GM10248 (cell line): ENCODE measurements at regions of chr16 and their contacts with region 1.

Region 1: GRCh38 chr16:24010440-24011089 is 174.8 kb downstream of the PRKCB start:
- DNase-seq: peak; percentile 66
- CTCF ChIP-seq: peak; percentile 89

Region 2: GRCh38 chr16:23803591-23804123 is 206.9 kb before region 1 on chr16:
- CTCF ChIA-PET with region 1: interaction called, 101 read pairs
- POLR2A ChIA-PET with region 1: no interaction called
- DNase-seq: peak; percentile 82
- CTCF ChIP-seq: peak; percentile 85

Region 3: DNA sequence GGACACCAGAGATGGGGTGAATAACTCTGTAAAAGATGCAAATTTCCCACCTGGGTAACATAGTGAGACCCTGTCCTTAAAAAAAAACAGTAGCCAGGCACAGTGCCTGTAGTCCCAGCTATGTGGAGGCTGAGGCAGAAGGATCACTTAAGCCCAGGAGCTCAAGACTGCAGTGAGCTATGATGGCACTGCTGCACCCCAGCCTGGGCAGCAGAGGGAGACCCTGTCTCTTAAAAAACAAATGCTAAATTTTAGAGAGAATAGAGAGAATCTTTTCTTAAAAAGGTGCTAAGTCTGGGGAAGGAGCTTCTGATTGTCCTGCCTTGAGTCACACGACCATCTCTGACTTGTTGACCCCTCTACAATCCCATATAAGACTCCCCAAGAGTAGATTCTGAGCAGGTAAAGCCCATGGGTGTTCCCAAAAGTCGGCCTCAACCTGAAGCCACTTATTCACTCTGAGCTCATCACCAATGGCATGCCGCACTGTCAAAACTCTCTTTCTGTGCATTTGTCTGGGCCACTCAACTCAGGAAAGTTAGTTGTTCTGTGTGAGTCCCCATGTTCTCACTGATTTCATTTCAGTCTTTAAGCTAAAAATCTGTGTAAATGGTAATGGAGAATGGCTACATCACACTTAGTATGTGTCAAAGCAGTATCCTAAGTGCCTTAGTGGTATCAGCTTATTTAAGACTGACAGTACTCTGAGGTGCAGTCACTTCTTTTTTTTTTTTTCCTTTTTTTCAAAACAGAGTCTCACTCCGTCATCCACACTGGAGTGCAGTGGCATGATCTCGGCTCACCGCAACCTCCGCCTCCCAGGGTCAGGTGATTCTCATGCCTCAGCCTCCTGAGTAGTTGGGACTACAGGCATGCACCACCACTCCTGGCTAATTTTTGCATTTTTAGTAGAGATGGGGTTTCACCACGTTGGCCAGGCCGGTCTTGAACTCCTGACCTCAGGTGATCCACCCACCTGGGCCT is 133.2 kb before region 1 on chr16:
- CTCF ChIA-PET with region 1: interaction called, 46 read pairs
- POLR2A ChIA-PET with region 1: no interaction called
- DNase-seq: peak; percentile 17
- CTCF ChIP-seq: peak; percentile 38

Region 4: GRCh38 chr16:23943604-23944003 is 67.0 kb before region 1 on chr16:
- CTCF ChIA-PET with region 1: no interaction called
- POLR2A ChIA-PET with region 1: no interaction called
- DNase-seq: no peak
- CTCF ChIP-seq: no peak

Region 5: DNA sequence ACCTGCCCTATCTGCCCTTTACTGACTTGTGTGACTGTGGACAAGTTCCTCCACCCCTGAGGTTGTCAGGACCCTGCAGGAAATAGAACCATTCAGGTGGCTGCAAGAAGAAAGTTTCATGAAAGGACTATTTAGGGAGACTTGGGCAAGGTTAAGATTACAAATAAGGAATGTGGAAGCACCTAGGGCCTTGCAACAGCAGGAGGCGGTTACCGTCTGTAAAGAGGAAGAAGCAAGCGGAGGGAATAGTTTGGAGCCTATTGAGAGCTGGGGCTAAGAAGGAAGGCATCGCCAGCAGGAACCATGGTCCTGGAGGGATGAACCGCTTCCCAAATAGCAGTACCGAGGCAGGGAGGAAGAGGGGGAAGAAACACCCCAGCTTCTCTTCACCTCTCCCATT is 42.4 kb before region 1 on chr16:
- CTCF ChIA-PET with region 1: interaction called, 10 read pairs
- POLR2A ChIA-PET with region 1: no interaction called
- DNase-seq: no peak
- CTCF ChIP-seq: no peak

Region 6: DNA sequence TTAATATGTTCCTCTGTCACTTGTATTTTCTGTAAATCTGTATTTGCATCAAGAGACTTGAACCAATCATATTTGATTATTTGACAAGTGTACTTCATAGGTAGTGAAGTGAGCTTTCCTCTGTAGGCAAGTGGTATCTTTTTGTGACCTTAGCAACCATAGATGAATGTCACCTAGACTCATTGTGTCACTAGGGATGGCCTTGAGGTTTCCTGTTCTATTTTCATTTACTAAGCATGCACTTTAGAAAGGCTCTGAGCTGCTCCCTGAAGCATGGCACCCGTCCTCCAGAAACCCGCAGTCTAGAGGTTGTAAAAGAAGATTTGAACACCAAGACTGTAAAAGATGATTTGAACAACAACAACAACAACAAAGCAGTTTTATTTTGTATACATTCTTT is 23.1 kb before region 1 on chr16:
- CTCF ChIA-PET with region 1: interaction called, 32 read pairs
- POLR2A ChIA-PET with region 1: no interaction called
- DNase-seq: peak; percentile 53
- CTCF ChIP-seq: no peak

Region 7: DNA sequence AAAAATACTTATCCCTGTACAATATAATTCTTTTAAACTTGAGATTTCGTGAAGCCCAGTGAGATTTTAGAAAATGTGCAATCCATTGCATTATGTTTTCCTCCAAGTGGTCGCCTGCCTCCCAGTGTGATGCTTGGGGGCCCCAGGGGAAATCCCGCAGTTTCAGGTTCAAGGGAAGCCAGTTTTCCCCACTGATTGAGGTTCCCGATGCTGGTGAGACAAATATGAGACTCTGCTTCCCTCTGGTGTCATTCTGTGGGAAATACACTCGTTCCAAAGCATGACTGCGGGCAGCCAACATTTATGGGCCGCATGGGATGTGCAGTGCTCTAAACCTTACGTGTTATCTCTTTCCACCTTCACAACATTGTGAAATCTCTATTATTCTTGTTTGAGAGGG is 26.0 kb after region 1 on chr16:
- CTCF ChIA-PET with region 1: interaction called, 18 read pairs
- POLR2A ChIA-PET with region 1: no interaction called
- DNase-seq: peak; percentile 66
- CTCF ChIP-seq: peak; percentile 66